Cardiac septum (tissue), 1 donor: ENCODE measurements at regions of chr2 and their contacts with region 1.

Region 1: DNA sequence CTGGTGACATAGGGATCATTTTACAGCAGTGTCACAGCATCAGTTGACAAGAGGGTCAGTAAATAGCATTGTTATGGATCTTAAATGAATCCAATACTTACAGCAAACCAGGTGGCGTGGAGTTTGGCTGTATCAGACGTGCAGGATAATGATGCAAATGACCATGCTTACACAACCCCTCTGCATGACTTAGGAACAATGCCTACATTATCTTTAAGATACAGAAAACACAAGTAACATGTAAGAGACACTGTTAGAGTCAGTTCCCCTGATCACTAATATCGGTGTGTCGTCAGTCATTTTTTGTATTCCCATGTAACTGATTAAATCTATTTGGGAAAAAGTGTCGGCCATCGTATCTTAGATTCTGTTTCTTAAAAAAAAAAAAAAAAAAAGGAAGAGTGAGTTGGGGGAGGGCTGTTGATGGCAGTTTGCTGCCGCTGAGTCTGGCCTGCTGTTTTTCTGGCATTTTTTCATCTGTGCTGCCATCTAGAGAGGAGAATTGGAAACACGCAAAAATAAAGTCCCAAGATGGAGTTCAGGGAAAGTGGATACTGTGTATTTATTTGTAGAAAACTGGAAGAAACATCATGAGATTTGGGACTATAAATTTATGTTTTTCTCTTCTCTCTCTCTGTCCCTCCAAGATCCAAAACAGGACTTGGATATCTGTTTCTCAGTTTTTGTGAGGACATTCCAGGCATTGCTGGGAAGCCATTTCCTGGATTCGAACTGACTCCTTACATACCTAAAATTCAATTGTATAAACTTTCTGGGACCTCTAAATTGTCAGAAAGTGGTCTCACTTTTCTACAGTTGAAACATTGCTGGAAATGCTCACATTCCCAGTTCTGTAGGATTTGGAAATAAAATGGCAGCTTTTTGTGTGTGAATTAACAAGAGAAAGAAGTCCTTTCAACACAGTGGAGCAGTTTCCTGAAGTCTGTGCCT is 60.3 kb upstream of the AGPS start:
- DNase-seq: no peak

Region 2: DNA sequence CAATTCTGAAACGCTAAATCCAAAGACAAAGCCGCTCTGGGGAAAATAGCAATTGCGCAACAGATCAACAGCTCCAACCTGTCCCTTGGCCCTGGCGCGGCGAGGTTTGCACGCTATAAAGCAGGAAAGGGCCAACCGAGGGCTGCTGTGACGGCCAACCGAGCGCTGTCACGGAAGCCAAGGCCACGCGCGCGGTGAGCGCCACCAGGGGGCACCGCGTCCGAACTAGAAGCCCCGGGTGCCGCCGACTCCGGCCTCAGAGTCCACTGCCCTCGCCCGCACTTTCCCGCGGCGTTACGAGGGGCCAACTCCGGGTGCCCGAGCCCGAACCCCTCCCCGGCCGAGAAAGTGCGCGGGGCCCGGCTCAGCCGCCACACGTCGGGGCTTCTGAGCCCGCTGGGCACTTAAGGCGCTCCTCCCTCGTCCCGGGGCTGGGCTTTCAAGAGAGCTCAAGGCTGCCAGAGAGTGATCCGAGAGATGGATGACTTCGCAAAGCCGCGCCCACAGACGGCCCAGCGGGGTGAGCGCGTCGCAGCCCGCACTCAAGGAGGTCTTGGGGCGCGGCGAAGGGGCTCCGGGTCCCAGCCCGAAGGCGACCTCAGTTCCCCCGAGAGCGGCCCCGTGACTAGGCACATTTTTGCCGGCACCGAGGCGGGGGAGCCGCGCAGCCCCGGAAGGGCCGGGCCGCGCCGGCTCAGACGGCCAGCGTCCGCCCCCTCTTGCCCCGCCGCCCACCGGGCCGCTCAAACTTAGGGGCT is 68.7 kb before region 1 on chr2:
- intact Hi-C with region 1: loop called (anchors 1 kb)
- DNase-seq: peak; percentile 99

Region 3: DNA sequence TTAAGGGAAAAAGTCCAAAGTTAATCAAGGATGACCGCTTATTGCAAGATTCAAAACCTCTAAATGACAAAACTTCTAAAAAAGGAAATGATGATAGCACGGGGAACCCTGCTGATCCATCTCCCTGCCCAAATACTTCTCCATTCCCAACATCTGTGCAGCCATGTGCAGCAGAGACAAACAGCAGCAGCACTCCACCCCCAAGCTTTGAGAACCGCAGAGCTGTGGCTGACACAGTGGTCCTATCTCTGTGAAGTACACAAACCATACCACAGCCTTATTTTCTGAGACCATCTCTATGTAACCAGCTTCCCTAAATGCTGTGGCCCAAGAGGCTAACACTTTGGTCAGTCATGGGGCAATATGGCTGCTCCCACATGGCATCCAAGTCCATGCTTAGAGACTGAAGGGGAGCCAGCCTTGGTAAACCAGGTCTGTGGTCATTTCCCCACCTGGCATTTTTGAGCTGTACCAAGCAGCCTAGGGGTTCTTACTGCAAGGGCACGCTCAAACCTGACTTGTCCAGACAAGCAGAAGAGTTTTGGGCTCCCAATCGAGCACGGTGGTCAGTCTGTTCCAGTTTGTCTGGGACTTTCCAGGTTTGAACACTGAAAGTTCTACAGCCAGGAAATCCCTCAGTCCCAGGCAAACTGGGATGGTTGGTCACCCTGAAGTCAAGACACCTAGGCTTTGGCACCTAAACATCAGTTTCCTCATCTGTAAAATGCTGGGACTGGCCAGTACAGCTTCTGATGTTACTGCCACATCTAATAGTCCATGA is 50.7 kb before region 1 on chr2:
- intact Hi-C with region 1: loop called (anchors 5 kb)
- DNase-seq: no peak

Region 4: DNA sequence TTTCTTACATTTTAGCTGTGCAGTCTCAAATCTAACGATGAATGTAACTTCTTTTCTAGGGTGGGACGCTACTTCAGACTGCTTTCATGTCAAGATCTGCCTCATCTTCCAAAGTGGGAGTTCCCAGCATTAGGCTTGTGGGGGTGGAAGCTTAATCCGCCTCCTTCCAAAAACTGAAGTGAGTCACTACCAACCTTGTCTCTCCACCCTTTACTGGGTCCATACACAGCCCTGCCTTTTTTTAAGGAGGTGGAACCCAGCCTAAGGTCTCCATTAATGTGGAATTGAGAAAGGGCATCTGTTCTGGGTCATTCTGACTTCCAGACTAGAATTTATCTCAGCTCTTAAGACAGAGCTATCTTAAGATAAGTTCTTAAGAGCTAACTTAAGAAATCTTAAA is 25.8 kb before region 1 on chr2:
- intact Hi-C with region 1: no loop called
- DNase-seq: no peak

Region 5: GRCh38 chr2:177419274-177419673 is 87.0 kb after region 1 on chr2:
- intact Hi-C with region 1: loop called (anchors 2 kb)
- DNase-seq: no peak

Region 6: DNA sequence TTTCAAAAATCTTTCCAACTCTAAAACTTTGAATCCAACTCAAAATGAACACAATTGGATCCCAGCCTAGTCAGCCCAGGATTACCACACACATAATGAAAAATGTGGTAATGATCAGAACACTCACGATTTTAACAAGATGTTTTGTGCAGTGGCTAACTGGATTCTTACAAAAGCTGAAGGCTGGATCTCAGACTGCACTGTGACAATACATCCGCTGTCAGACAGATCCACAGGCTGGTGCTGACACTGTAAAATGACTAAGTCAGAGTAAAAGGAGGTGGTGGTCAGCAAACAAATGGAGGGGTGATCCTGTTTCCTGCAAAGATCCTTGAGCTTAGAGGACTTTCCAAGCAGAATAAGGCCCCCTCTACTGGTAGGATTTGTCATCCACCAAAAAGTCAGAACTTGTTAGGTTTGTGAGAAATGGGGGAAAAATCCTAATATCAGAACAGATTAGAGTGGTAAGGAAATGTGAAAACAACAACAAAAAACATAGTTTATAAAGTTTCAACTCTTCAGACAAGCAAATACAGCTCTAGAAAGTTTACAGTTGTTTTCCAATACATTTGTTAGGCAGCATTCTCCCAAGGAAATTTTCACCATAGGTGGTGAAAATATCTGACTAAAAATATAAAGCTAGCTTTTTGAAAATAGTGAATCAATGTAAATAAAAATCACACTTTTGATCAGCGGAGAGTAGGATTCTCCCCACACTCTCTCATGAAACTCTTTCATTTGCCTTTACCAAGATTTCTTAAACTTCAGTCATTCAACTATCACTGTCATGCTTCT is 272.2 kb after region 1 on chr2:
- intact Hi-C with region 1: loop called (anchors 5 kb)
- DNase-seq: no peak

Region 7: DNA sequence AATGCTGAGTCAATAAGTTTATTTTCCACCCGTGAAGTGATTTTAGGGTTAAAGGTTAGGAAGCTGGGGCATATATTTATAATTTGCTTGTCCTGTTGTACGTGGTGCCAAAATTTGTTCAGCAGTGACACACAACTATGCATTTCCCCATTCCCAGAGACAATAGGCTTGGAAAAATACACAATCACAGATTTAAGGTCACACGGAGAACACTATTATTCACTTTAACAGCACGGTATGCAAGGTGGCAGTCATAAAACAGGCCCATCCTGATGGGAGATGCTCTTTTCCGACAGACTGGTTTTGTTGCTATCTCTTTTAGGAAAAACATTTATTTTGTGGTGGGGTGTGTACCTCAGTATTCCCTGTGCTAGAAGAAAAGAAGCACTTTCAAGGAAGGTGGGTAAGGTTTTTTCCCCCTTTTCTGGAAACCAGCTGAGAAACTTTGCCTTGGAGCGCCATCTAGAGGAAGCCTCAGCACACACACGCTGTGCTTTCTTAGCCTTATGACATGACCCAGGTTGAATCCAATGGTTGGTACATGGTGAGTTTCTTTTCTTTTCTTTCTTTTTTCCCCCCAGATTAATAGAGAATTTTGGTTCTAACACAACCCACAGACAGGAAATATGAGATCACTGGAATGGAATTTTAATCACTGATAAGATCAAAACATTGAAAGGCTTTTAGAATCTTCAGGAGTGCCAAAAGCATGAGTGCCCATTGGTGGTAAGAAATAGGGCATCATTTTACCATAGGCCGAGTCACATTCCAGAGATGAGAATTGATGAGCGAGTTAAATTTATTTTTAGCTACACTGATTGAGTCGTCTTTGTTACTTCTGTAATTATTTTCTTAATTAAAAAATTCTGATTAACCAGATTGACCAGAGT is 392.3 kb after region 1 on chr2:
- intact Hi-C with region 1: loop called (anchors 2 kb)
- DNase-seq: no peak

Region 8: GRCh38 chr2:177763532-177764265 is 431.4 kb after region 1 on chr2:
- intact Hi-C with region 1: loop called (anchors 5 kb)
- DNase-seq: no peak

Region 9: GRCh38 chr2:178128836-178129630 is 796.7 kb after region 1 on chr2:
- intact Hi-C with region 1: no loop called
- DNase-seq: no peak